Left ventricle myocardium inferior (tissue), 1 donor: ENCODE measurements at regions of chrX and their contacts with region 1.

Region 1: DNA sequence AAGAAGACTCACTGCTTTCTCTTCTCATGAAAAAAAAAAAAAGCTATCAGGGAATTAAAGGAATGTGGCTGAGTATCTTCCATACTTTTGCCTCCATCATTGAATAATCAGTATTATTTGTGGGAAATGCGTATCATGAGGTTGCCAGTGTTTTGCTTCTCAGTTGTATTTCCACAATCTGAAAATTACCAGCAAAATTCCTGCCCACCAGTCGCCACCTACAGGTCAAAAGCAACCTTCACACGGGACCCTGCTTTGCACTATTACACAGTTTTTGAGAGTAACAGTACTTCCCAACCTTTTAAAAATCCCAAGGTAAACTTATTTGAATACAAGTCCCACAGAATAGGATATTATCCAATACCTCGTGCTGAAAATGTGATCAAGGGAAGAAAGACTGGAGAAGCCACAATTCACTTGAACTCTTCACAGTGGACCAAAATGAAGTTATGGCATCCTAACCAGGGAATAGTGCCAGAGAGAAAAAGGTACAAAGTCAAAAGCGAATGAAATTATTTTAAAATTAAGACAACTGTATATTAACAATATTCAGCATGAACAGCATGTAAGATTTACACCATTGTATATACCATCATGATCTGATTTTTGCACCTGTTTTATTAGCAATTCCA is 30.4 kb downstream of the PGRMC1 start:
- DNase-seq: no peak
- H3K4me3 ChIP-seq: no peak overlapping the region
- H3K27ac ChIP-seq: no peak overlapping the region
- H3K4me1 ChIP-seq: no peaks in the 10 kb centered on the region
- H3K27me3 ChIP-seq: no peaks in the 10 kb centered on the region
- CTCF ChIP-seq: peak; percentile 68

Region 2: GRCh38 chrX:119118780-119119395 is 147.6 kb before region 1 on chrX:
- intact Hi-C with region 1: loop called (anchors 10 kb)
- DNase-seq: peak; percentile 26
- H3K4me3 ChIP-seq: no peak overlapping the region
- H3K27ac ChIP-seq: no peak overlapping the region
- H3K4me1 ChIP-seq: no peaks in the 10 kb centered on the region
- H3K27me3 ChIP-seq: no peaks in the 10 kb centered on the region
- CTCF ChIP-seq: peak; percentile 77